Sciatic nerve (tissue), 2 donors: ENCODE measurements at regions of chr2 and their contacts with region 1.

Region 1: DNA sequence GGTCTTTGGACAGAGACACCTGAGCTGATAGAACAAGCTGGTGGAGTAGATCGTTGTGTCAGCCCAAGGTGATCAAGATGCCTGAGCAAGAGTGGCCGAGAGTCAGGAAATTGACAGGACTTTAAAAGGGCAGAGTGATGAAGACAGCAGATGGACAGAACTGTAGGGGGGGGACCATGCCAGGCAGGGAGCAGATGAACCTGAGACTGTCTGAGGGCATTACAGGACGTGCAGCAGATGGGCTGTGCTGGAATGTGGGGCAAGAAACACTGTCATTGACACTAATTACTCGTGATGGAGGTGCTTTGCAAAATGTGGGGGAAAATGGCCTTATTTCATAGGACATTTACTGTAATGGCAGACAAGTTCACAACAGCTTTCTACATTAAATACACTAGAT is 225.0 kb downstream of the THSD7B start:
- DNase-seq: no peak
- ATAC-seq: no peak

Region 2: GRCh38 chr2:136741471-136741870 is 248.8 kb before region 1 on chr2:
- intact Hi-C with region 1: loop called (anchors 5 kb)
- DNase-seq: no peak
- ATAC-seq: no peak

Region 3: GRCh38 chr2:137316075-137316474 is 325.8 kb after region 1 on chr2:
- intact Hi-C with region 1: no loop called
- DNase-seq: no peak
- ATAC-seq: no peak